GM12878 (cell line): ENCODE measurements at regions of chrX and their contacts with region 1.

Region 1: GRCh38 chrX:130975947-130976346 is 72.9 kb upstream of the ENOX2 start:
- DNase-seq: no peak
- ATAC-seq: peak; percentile 92
- H3K4me3 ChIP-seq: no peak overlapping the region
- H3K27ac ChIP-seq: no peak overlapping the region
- H3K4me1 ChIP-seq: no peaks in the 10 kb centered on the region
- H3K27me3 ChIP-seq: no peaks in the 10 kb centered on the region
- CTCF ChIP-seq: peak; percentile 60 to 69 (median 63); a peak in 5 of 6 replicates
- EP300 ChIP-seq: no peak
- POLR2A ChIP-seq: no peak
- RAD21 ChIP-seq: peak; percentile 67

Region 2: DNA sequence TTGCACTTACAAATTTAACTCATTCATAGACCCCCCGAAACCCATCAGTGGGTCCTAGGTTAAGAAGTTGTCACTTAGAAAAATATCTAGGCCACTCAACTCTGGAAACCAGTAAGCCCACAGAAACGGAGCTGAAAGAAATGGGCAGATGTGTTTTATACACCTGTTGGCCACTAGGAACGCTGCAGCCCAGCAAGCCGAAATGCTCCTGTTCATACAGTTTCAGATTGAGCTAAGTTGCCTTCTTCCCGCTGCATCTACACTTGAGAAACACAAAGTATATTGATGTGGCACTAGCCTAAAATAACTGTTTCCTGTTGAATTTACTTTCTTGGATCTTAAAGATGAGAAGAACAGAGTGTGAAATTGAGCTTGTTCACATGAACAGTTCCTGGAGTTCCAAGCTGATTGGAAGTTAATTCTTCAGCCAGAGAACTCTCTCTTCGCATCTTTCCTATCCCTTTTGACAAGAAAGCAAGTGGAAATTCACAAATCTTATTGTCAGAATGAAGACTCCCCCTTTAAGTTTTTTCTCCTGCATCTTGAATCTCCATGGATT is 400.0 kb before region 1 on chrX:
- CTCF ChIA-PET with region 1: no interaction called
- POLR2A ChIA-PET with region 1: no interaction called
- RAD21 ChIA-PET with region 1: no interaction called
- SMC1A ChIA-PET with region 1: no interaction called
- in situ Hi-C with region 1: no loop called
- intact Hi-C with region 1: no loop called
- DNase-seq: no peak
- ATAC-seq: peak; percentile 88
- H3K4me3 ChIP-seq: no peak overlapping the region
- H3K27ac ChIP-seq: no peak overlapping the region
- H3K4me1 ChIP-seq: no peaks in the 10 kb centered on the region
- H3K27me3 ChIP-seq: peaks cover 0 to 3% of the 10 kb centered on the region in 2 experiments; a peak in 1 of 4 replicates
- CTCF ChIP-seq: peak; percentile 80 to 92 (median 90)
- EP300 ChIP-seq: no peak
- POLR2A ChIP-seq: no peak
- RAD21 ChIP-seq: peak; percentile 72

Region 3: DNA sequence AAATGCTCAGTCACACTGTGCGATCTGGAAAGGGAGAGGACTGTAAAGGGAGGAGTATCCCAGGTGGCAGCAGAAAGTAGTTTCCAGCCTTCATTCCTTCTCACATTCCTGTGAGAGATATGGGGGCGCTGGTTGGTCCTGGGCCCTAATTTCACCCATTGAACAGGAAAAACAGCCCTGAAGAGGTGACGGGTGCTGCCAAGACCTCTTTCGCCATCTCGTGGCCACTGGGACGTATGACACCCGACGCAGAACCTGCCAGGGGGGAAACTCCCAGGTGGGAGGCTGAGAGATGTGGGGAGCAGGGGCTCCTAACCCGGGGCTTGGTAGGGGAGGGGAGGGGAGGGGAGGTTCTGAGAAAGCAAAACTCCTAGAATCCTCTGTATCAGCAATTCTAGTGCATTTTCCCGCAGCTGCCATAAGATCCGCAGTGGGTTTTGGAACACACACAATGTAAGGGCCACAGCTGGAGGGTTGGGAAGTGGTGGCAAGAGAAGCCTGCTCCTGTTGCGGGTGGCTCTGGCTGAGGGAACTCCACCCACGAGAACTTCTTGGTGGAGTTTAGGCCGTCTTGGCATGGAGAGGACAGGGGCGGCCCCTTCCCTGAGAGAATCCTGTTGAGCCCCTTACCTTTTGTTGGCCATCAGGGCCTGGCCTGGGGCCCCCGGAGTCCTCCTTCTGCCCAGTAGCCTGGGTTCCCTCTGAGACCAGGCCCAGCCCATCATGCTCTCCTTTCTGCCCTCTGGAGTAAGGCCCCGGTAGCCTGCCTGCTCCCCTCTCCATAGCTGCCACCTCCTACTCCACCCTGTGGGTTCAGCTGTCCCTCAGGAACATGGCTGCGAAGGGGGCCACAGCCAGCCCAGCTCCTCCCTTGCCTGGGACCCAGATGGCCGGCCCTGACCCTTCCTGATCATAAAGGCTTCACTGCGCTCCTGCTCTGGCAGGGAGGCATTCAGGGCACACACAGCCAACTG is 702.0 kb after region 1 on chrX:
- CTCF ChIA-PET with region 1: interaction called, 13 read pairs
- POLR2A ChIA-PET with region 1: no interaction called
- RAD21 ChIA-PET with region 1: no interaction called
- SMC1A ChIA-PET with region 1: no interaction called
- in situ Hi-C with region 1: no loop called
- intact Hi-C with region 1: loop called (anchors 1 kb)
- DNase-seq: no peak
- ATAC-seq: peak; percentile 94
- H3K4me3 ChIP-seq: no peak overlapping the region
- H3K27ac ChIP-seq: no peak overlapping the region
- H3K4me1 ChIP-seq: no peaks in the 10 kb centered on the region
- H3K27me3 ChIP-seq: no peaks in the 10 kb centered on the region
- CTCF ChIP-seq: peak; percentile 79 to 89 (median 82)
- EP300 ChIP-seq: no peak
- POLR2A ChIP-seq: no peak
- RAD21 ChIP-seq: peak; percentile 69